ENCODE measurements at regions of chr6 and their contacts with region 1.

Region 1: GRCh38 chr6:125790358-125791150 is at the start of gene NCOA7:
- DNase-seq: peak; percentile 58 to 90 (median 81)
- ATAC-seq: peak; percentile 79
- H3K4me3 ChIP-seq: peak within 1 kb of the TSS; percentile 78 to 81
- H3K4me3 Mint-ChIP-seq: peak within 1 kb of the TSS; percentile 91
- H3K27ac ChIP-seq: peak within 1 kb of the TSS; percentile 72 to 92
- H3K27ac Mint-ChIP-seq: peak within 1 kb of the TSS; percentile 98
- H3K4me1 ChIP-seq: peaks cover 23% of the 10 kb centered on the region
- H3K4me1 Mint-ChIP-seq: peaks cover 49% of the 10 kb centered on the region
- H3K27me3 ChIP-seq: no peaks in the 10 kb centered on the region
- H3K27me3 Mint-ChIP-seq: no peaks in the 10 kb centered on the region
- CTCF ChIP-seq: no peak
- total RNA-seq, gene NCOA7: 27.2 to 28.6 TPM

Region 2: DNA sequence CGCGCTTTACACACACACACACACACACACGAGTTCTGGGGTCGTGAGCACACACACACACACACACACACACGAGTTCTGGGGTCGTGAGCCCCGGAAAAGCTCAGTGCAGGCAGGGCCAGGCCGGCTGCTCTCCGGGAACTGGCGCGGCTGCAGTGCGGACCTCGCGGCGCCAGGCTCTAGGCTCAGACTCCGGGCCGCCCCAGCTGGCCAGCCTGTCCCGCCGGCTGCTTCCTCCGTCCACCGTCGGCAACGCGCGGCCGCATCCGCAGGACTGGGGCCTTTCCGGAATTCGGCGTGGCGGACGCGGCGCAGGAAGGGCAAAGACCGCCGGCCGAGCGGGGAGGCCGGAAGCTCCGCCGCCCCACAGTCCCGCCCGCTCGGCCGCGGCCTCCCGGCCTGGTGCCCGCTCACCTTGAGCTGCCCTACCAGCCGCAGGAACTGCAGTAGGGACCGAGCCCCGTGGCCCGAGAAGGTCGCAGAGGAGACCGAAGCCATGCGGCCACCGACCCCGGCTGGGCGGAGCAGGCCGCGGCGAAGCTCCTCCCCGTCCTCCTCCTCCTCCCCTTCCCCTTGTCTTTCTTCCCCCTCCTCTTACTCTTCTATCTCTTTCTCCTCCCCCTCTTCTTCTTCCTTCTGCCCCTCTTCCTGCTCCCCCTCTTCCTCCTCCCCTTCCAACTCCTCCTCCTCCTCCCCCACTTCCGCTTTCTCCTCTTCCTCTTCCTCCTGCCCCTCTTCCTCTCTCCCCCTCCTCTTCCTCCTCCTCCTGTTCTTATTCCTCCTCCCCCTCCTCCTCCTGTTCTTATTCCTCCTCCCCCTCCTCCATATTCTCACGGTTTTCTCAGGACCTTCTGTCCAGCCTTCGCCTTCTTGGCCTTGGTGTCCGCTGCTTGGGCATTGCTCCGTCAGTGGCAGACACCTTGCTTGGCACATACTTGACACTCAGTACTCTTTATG is 488.8 kb before region 1 on chr6 and contains the start of gene HDDC2:
- CTCF ChIA-PET with region 1: no interaction called
- POLR2A ChIA-PET with region 1: interaction called, 21 read pairs
- intact Hi-C with region 1: no loop called
- DNase-seq: peak in 8 of 9 experiments; percentile 27 to 67 (median 44)
- ATAC-seq: peak; percentile 43
- H3K4me3 ChIP-seq: peak within 1 kb of the TSS; percentile 65 to 70
- H3K4me3 Mint-ChIP-seq: peak within 1 kb of the TSS; percentile 82
- H3K27ac ChIP-seq: peak within 1 kb of the TSS; percentile 58 to 83
- H3K27ac Mint-ChIP-seq: peak within 1 kb of the TSS; percentile 88
- H3K4me1 ChIP-seq: peaks cover 39% of the 10 kb centered on the region
- H3K4me1 Mint-ChIP-seq: peaks cover 57% of the 10 kb centered on the region
- H3K27me3 ChIP-seq: no peaks in the 10 kb centered on the region
- H3K27me3 Mint-ChIP-seq: peaks cover 4% of the 10 kb centered on the region
- CTCF ChIP-seq: no peak
- total RNA-seq, gene HDDC2: 16.2 to 24.9 TPM

Region 3: DNA sequence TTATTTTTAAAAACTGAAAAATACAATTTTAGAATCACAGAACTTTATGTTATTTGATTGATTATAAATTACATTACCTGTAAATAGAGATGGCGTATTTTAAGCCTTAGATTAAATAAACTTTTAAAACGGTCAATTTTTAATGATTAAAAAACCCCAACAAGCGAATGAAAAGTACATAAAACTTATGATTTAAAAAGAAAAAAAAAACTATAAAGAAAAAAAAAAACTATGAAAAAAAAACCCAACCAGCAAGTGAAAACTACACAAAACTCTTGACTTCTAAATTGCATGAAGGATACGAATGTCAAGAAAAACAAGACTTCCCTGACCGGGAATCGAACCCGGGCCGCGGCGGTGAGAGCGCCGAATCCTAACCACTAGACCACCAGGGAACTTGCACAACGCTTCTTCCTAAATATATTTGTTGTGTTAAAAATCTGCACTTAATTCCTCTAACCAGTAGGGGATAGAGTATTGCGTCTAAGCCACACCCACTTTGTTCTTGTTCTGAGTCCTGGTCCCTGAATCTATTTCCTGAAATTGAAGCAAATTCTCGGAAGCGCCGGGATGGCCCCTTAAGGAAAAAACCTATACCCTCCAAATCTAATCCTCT is 10.5 kb before region 1 on chr6:
- CTCF ChIA-PET with region 1: interaction called, 54 read pairs
- POLR2A ChIA-PET with region 1: interaction called, 257 read pairs
- intact Hi-C with region 1: loop called (anchors 1 kb)
- DNase-seq: peak; percentile 78 to 94 (median 85)
- ATAC-seq: peak; percentile 77
- H3K4me3 ChIP-seq: peak overlapping the region; percentile 68 to 73
- H3K4me3 Mint-ChIP-seq: no peak overlapping the region
- H3K27ac ChIP-seq: peak overlapping the region; percentile 84 to 90
- H3K27ac Mint-ChIP-seq: no peak overlapping the region
- H3K4me1 ChIP-seq: peaks cover 13% of the 10 kb centered on the region
- H3K4me1 Mint-ChIP-seq: peaks cover 11% of the 10 kb centered on the region
- H3K27me3 ChIP-seq: no peaks in the 10 kb centered on the region
- H3K27me3 Mint-ChIP-seq: no peaks in the 10 kb centered on the region
- CTCF ChIP-seq: peak; percentile 43

Region 4: DNA sequence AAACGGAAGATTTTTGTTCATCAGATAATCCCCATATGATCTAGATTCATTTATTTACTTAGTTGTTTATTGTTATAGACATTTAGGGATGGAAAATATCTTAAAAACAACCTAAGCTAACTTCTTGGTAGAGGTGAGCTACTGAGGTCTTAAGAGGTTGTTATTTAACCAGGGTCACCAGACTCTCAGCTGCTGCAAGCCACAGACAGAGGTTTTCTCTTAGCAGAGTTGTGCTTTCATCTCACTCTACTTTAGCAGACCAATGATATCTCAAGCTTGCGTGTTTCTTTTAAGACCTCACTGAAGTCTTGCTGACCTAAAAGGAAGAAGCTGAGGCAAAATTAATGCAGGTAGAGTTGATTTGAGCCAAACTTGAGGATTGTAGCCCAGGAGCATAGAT is 43.8 kb after region 1 on chr6:
- CTCF ChIA-PET with region 1: interaction called, 29 read pairs
- POLR2A ChIA-PET with region 1: interaction called, 46 read pairs
- intact Hi-C with region 1: no loop called
- DNase-seq: peak in 2 of 9 experiments; percentile 40 to 50
- ATAC-seq: peak; percentile 56
- H3K4me3 ChIP-seq: no peak overlapping the region
- H3K4me3 Mint-ChIP-seq: peak overlapping the region; percentile 9
- H3K27ac ChIP-seq: peak overlapping the region in 1 of 2 experiments; percentile 34
- H3K27ac Mint-ChIP-seq: peak overlapping the region; percentile 73
- H3K4me1 ChIP-seq: peaks cover 19% of the 10 kb centered on the region
- H3K4me1 Mint-ChIP-seq: peaks cover 54% of the 10 kb centered on the region
- H3K27me3 ChIP-seq: no peaks in the 10 kb centered on the region
- H3K27me3 Mint-ChIP-seq: no peaks in the 10 kb centered on the region
- CTCF ChIP-seq: no peak

Region 5: DNA sequence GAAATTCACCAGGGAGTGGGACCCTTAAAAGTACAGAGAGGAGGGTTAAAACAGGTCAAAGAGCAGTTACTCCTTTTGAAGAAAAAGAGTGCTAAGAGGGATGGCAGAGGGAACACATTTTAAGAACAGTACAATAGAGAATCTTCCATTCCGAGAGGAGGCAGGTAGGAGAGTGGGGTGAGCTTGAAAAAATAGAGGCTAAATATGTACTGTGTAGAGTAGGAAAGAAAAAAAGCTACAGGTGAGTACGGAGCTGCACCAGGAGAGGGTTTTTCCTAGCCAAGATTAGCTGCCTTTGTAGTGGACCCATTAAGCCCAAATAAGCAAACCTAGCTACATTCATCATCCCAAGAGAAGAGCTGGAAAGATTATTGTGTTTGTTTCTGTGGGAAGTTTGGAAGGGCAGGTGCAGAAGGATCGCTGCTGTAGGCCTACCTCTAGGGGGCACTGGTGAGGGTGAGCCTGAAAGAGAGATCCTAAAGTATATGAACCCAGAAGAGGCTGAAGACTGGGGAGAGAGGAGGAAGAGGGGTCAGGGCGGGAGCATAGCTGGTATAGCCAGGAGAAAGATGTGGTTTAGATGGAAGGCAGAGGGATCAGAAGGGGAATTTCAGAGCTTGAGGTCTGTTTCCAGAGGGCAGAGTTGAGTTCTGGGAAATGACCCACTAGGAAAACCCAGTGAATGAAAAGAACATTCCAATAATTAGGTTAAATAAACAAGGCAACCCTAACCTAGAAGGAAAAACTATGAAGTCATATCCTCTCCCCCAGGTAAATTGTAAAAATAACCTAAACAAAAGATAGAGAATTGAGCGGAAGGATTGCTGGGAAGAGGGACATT is 115.8 kb after region 1 on chr6:
- CTCF ChIA-PET with region 1: interaction called, 8 read pairs
- POLR2A ChIA-PET with region 1: interaction called, 7 read pairs
- intact Hi-C with region 1: loop called in 1 of 2 experiments (anchors 2 kb)
- DNase-seq: peak in 7 of 9 experiments; percentile 13 to 63 (median 43)
- ATAC-seq: peak; percentile 71
- H3K4me3 ChIP-seq: no peak overlapping the region
- H3K4me3 Mint-ChIP-seq: no peak overlapping the region
- H3K27ac ChIP-seq: no peak overlapping the region
- H3K27ac Mint-ChIP-seq: no peak overlapping the region
- H3K4me1 ChIP-seq: no peaks in the 10 kb centered on the region
- H3K4me1 Mint-ChIP-seq: peaks cover 2% of the 10 kb centered on the region
- H3K27me3 ChIP-seq: no peaks in the 10 kb centered on the region
- H3K27me3 Mint-ChIP-seq: no peaks in the 10 kb centered on the region
- CTCF ChIP-seq: peak; percentile 60

Region 6: GRCh38 chr6:125974214-125974866 is 183.8 kb after region 1 on chr6:
- CTCF ChIA-PET with region 1: interaction called, 28 read pairs
- POLR2A ChIA-PET with region 1: interaction called, 6 read pairs
- intact Hi-C with region 1: no loop called
- DNase-seq: peak in 2 of 9 experiments; percentile 54 to 65
- ATAC-seq: peak; percentile 63
- H3K4me3 ChIP-seq: no peak overlapping the region
- H3K4me3 Mint-ChIP-seq: no peak overlapping the region
- H3K27ac ChIP-seq: no peak overlapping the region
- H3K27ac Mint-ChIP-seq: no peak overlapping the region
- H3K4me1 ChIP-seq: no peaks in the 10 kb centered on the region
- H3K4me1 Mint-ChIP-seq: peaks cover 13% of the 10 kb centered on the region
- H3K27me3 ChIP-seq: no peaks in the 10 kb centered on the region
- H3K27me3 Mint-ChIP-seq: no peaks in the 10 kb centered on the region
- CTCF ChIP-seq: peak; percentile 69

Region 7: DNA sequence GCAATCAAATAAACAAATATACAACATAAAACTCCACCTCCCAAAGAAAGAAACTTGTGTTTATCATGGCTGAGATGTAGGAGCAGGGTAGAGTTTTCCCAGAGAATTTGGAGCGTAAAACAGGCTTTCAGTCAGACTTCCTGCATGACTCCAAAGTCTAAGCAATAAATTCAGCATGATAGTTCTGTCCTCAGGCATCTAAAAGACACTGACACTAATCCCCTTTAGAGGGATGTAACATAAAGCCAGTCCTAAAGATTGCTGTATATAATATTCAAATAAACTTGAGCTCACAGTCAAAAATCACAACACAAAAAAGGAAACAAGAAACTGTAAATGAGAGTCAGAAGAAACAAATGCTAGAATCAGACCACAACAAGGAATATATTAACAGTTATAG is 783.7 kb after region 1 on chr6:
- CTCF ChIA-PET with region 1: no interaction called
- POLR2A ChIA-PET with region 1: no interaction called
- intact Hi-C with region 1: no loop called
- DNase-seq: no peak
- ATAC-seq: no peak
- H3K4me3 ChIP-seq: no peak overlapping the region
- H3K4me3 Mint-ChIP-seq: no peak overlapping the region
- H3K27ac ChIP-seq: no peak overlapping the region
- H3K27ac Mint-ChIP-seq: no peak overlapping the region
- H3K4me1 ChIP-seq: no peaks in the 10 kb centered on the region
- H3K4me1 Mint-ChIP-seq: no peaks in the 10 kb centered on the region
- H3K27me3 ChIP-seq: no peaks in the 10 kb centered on the region
- H3K27me3 Mint-ChIP-seq: no peaks in the 10 kb centered on the region
- CTCF ChIP-seq: no peak